ENCODE measurements at regions of chr18 and their contacts with region 1.

Region 1: DNA sequence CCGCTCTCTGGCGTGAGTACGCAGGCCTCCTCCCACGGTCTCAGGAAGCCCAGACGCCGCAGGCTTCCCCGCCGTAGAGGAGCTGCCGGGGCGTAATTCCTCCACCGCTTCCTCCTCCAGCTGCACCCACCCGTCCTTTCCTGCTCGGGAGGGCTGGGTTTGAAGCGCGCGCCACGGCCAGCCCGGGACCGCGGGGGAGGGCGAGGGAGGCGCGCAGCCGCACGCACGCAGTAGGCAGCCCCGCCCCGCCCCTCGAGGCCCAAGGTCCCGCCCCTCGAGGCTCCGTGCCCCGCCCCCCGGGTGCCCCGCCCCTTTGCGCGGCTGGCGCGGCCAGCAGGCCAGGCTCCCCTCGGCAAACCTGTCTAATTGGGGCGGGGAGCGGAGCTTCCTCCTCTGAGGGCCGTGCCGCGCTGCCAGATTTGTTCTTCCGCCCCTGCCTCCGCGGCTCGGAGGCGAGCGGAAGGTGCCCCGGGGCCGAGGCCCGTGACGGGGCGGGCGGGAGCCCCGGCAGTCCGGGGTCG is at the start of gene MALT1:
- DNase-seq: peak; percentile 93
- H3K4me3 Mint-ChIP-seq: peak within 1 kb of the TSS; percentile 94
- H3K27ac Mint-ChIP-seq: peak within 1 kb of the TSS; percentile 92
- H3K4me1 Mint-ChIP-seq: peaks cover 65% of the 10 kb centered on the region
- H3K27me3 Mint-ChIP-seq: no peaks in the 10 kb centered on the region
- total RNA-seq, gene MALT1: 39.7 to 41.0 TPM

Region 2: DNA sequence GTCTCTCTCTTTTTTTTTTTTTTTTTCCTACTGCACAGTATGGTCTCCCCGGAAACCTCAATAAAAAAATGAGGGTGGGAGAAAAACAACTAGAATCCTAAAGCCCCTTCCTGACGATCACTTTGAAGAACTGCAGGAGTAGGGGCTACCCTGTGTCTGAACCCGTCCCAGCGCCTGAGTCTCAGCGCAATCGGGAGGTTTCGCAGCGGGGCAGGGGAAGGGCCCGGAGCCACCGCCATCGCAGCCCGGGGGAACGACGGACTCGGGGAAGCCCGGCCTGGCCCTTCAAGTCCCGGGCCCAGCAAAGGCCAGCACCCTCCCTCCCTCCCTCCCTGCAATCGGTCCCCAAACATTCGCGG is 1049.9 kb before region 1 on chr18:
- CTCF ChIA-PET with region 1: no interaction called
- intact Hi-C with region 1: loop called (anchors 5 kb)
- DNase-seq: peak; percentile 28
- H3K4me3 Mint-ChIP-seq: peak overlapping the region; percentile 98
- H3K27ac Mint-ChIP-seq: peak overlapping the region; percentile 95
- H3K4me1 Mint-ChIP-seq: peaks cover 32% of the 10 kb centered on the region
- H3K27me3 Mint-ChIP-seq: no peaks in the 10 kb centered on the region

Region 3: GRCh38 chr18:58541789-58542425 is 129.3 kb before region 1 on chr18:
- CTCF ChIA-PET with region 1: interaction called, 29 read pairs
- intact Hi-C with region 1: loop called (anchors 1 kb)
- DNase-seq: peak; percentile 87
- H3K4me3 Mint-ChIP-seq: no peak overlapping the region
- H3K27ac Mint-ChIP-seq: peak overlapping the region; percentile 88
- H3K4me1 Mint-ChIP-seq: peaks cover 83% of the 10 kb centered on the region
- H3K27me3 Mint-ChIP-seq: no peaks in the 10 kb centered on the region

Region 4: DNA sequence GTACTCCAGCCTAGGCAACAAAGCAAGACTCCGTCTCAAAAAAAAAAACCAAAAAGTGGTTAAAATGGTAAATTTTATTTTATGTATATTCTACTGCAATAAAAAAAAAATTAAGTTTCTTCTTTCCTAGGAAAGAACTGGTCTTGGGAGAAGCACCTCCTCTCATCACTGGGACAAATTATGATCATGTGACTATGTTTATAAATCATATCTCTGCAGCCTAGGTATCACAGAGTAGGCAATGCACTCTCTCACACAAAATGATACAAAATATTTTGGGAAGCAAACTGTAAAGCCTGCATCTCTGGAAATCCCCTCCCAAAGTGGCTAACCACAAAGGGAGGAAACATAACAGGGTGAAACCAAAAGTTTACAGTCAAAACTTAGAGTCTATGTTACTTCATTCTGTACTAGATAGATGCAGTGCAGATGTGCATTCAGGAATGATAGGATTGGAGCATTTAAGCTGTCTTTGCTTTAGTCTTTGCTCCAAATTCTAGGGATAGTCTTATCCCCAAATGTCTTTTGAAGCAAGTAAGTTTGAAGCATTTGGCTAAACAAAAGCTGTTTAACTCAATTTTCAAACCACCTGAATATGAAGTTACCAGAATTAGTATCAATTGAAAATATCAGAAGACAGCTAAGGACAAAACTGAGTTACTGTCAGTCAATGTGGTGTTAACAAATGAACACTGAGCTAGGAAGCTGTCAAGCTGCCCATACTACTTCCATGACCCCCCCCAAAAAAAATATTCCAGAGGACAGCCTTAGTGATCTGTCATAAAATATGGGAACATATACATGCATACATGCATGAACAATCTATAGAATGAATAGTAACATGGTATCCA is 21.0 kb before region 1 on chr18:
- CTCF ChIA-PET with region 1: no interaction called
- intact Hi-C with region 1: loop called (anchors 1 kb)
- DNase-seq: peak; percentile 78
- H3K4me3 Mint-ChIP-seq: no peak overlapping the region
- H3K27ac Mint-ChIP-seq: no peak overlapping the region
- H3K4me1 Mint-ChIP-seq: peaks cover 59% of the 10 kb centered on the region
- H3K27me3 Mint-ChIP-seq: no peaks in the 10 kb centered on the region

Region 5: DNA sequence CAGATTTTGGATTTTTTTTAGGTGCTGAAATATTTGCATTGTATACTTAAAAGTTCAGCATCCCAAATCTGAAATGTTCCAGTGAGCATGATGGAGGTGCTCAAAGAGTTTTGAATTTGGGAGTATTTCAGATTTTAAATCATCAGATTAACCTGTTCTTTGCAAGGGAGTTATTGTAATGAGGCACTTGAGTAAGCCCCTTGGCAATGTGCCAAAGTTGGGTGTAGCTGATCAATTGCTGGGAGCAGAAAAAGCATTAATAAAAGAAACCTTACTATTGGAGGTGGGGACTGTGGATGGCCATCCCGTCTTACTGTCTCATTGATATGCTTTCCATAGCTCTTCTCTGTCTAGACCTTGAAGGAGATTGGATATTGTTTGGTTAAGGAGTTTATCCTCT is 28.4 kb after region 1 on chr18:
- CTCF ChIA-PET with region 1: interaction called, 7 read pairs
- intact Hi-C with region 1: loop called (anchors 1 kb)
- DNase-seq: no peak
- H3K4me3 Mint-ChIP-seq: no peak overlapping the region
- H3K27ac Mint-ChIP-seq: no peak overlapping the region
- H3K4me1 Mint-ChIP-seq: peaks cover 50% of the 10 kb centered on the region
- H3K27me3 Mint-ChIP-seq: no peaks in the 10 kb centered on the region

Region 6: GRCh38 chr18:58761241-58761969 is 90.2 kb after region 1 on chr18:
- CTCF ChIA-PET with region 1: interaction called, 35 read pairs
- intact Hi-C with region 1: no loop called
- DNase-seq: no peak
- H3K4me3 Mint-ChIP-seq: no peak overlapping the region
- H3K27ac Mint-ChIP-seq: no peak overlapping the region
- H3K4me1 Mint-ChIP-seq: peaks cover 22% of the 10 kb centered on the region
- H3K27me3 Mint-ChIP-seq: peaks cover 18% of the 10 kb centered on the region

Region 7: DNA sequence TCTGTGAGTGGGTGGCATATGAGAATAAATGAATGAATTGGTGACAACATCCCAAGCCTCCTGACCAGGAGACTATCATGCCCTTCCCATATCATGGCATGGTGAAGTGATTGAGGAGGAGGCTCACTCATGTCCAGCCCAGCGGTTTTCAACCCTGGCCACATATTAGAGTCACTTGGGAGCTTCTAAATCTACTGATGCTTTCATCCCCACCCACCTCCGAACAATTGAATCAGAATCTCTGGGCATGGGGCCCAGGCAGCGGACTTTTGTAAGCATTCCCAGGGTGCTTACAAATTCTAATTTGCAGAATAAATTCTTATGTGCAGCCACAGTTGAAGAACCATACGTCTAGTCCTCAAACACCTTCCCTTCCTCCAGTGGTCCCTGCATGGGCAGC is 386.8 kb after region 1 on chr18:
- CTCF ChIA-PET with region 1: no interaction called
- intact Hi-C with region 1: no loop called
- DNase-seq: no peak
- H3K4me3 Mint-ChIP-seq: no peak overlapping the region
- H3K27ac Mint-ChIP-seq: no peak overlapping the region
- H3K4me1 Mint-ChIP-seq: no peaks in the 10 kb centered on the region
- H3K27me3 Mint-ChIP-seq: peaks cover 9% of the 10 kb centered on the region

Measured in activated naive CD4-positive, alpha-beta T cell treated with anti-CD3 and anti-CD28 coated beads for 36 hours (primary cell).